ENCODE measurements at regions of chr16 and their contacts with region 1.

Region 1: DNA sequence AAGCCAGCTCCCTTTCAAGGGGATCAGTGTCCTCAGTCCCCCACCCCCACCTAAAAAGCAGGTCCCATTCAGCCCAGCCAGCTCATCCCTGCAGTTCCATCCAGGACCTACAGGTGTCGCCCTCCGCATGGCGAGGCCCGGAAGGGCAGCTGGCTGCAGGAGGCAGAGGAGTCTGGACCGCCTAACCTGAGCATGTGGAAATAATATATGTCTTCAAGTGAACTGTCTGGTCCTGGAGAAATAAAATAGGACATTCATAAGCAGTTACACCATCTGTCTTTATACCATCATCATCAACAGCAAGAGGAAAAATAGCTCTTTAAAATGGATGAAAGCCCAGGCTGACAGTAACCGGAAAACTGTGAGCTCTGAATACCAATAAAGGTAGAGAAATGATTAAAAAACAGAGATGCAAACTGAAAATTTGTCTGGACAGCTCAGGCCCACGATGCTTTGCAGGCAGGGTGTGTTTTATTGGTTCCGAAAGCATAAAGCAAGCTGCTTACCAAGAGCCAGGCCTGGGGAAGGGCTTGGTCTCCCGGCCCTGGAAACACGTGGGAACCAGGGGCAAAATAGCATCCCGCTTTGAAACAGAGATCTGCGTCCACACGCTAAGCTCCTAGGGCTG is 215.2 kb downstream of the ZFHX3 start:
- DNase-seq: peak; percentile 37
- H3K4me3 ChIP-seq: no peak overlapping the region
- H3K27me3 ChIP-seq: no peaks in the 10 kb centered on the region
- CTCF ChIP-seq: peak; percentile 100

Region 2: DNA sequence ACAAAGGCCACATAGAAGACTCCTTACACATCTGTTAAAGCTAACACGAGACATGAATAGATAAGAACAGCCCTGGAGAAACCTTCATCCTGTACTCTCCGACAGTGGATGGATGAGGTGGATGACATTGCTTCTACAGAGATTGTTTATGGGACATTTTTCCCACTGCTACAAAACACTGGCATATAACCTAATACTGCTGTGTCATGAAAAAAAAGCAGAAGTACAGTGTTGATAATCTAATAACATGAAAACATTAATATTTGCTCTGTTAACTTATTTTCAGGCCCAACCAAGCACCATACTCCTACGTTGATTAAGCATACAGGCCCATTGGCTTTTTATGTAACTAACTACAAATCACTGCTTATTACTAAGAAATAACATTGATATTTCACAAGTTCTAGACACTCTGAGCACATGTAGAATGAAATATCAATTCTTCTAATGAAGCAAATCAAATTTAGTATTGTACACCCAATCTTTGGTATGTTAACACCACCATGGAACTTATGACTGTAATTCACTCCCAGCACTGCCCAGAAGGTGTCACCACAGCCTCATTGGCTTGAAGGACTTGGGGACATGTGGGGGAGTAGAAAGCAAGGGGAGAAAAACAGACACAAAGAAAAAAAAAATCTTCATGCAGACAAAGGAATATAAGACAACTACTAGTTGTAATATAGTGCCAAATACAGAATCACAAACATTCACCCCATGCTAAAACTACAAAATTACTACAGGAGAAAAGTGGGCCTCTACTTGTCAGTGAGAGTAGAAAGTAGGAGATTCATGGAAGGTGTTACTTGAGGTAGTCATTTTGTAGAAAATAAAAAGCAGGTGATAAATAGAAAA is 330.8 kb before region 1 on chr16:
- CTCF ChIA-PET with region 1: interaction called, 10 read pairs
- POLR2A ChIA-PET with region 1: no interaction called
- DNase-seq: no peak
- H3K4me3 ChIP-seq: no peak overlapping the region
- H3K27me3 ChIP-seq: no peaks in the 10 kb centered on the region
- CTCF ChIP-seq: peak; percentile 91

Region 3: GRCh38 chr16:72768591-72768990 is 64.1 kb before region 1 on chr16:
- CTCF ChIA-PET with region 1: no interaction called
- POLR2A ChIA-PET with region 1: no interaction called
- DNase-seq: no peak
- H3K4me3 ChIP-seq: no peak overlapping the region
- H3K27me3 ChIP-seq: no peaks in the 10 kb centered on the region
- CTCF ChIP-seq: no peak

Region 4: DNA sequence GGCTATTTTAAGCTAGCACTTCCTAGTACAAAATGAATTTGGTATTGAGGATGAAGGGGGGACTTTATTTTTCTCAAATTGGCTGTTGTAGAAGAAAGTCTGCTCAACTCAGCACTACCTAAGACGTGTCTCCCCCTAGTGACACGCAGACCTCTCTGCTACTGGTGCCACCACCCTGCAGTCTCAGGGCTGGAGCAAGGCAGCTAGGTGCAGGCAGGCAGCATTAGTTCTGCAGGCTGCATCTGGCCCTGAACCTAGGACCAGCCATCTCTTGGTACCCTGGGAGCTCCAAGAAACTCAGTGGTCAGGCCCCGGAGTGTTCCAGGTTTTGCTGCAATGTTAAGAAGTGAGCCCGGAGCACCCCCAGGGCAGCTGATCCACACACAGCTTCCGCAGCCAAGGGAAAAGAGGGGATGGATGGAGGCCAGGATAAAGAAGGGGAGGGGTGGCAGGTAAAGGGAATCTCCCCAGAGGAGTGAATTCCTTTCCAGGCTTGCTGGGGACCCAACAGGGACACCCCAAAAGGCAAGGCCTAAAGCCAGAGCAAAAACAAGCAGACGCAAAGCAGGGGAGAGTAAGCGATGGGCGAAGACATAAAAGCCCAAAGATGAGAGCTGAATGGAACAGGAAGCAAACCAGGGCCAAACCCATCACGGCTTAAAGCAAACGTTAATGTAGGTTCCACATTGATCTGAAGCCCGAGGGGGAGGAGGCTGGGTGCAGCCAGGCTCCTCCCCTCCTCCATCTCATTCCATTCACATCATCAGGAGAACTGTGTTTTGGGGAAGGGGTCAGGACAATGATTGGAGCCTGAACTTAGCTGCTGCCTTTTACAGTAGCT is 14.7 kb after region 1 on chr16:
- CTCF ChIA-PET with region 1: interaction called, 25 read pairs
- POLR2A ChIA-PET with region 1: interaction called, 6 read pairs
- DNase-seq: no peak
- H3K4me3 ChIP-seq: no peak overlapping the region
- H3K27me3 ChIP-seq: no peaks in the 10 kb centered on the region
- CTCF ChIP-seq: peak; percentile 50

Region 5: GRCh38 chr16:73000020-73000906 is 167.5 kb after region 1 on chr16:
- CTCF ChIA-PET with region 1: interaction called, 12 read pairs
- POLR2A ChIA-PET with region 1: interaction called, 6 read pairs
- DNase-seq: no peak
- H3K4me3 ChIP-seq: no peak overlapping the region
- H3K27me3 ChIP-seq: no peaks in the 10 kb centered on the region
- CTCF ChIP-seq: no peak

Region 6: DNA sequence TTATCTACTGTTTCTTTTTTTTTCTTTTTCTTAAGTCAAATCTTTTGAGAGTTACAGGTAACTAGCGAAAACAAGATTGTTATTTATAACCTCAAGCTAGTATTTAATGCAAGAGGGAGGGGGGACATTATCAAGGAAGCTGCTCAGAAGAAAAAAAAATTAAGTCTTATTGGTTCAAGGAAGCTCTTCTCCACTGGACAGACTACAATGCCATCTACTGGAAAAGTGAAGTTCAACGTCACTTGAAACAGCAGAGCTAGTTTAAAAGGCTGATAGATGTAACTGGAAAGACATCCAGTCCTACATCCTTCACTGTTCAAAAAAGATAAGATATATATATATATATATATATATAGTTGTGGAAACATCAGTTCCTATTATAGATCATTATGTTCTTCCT is 1045.9 kb after region 1 on chr16:
- CTCF ChIA-PET with region 1: interaction called, 10 read pairs
- POLR2A ChIA-PET with region 1: no interaction called
- DNase-seq: peak; percentile 32
- H3K4me3 ChIP-seq: no peak overlapping the region
- H3K27me3 ChIP-seq: no peaks in the 10 kb centered on the region
- CTCF ChIP-seq: peak; percentile 62

Measured in BJ (cell line).